ENCODE measurements at regions of chr13 and their contacts with region 1.

Region 1: GRCh38 chr13:78121459-78122348 is 203.1 kb upstream of the EDNRB start:
- DNase-seq: peak; percentile 64
- ATAC-seq: peak; percentile 42; the same call in 1 of the 2 replicates
- H3K4me3 ChIP-seq: no peak overlapping the region
- H3K27ac ChIP-seq: peak overlapping the region; percentile 21; the same call in 1 of the 2 replicates
- H3K4me1 ChIP-seq: no peaks in the 10 kb centered on the region
- H3K27me3 ChIP-seq: no peaks in the 10 kb centered on the region
- CTCF ChIP-seq: peak; percentile 82

Region 2: GRCh38 chr13:77810430-77810829 is 311.3 kb before region 1 on chr13:
- CTCF ChIA-PET with region 1: interaction called, 7 read pairs
- POLR2A ChIA-PET with region 1: no interaction called
- intact Hi-C with region 1: loop called (anchors 1 kb)
- DNase-seq: peak; percentile 53
- ATAC-seq: peak; percentile 53
- H3K4me3 ChIP-seq: no peak overlapping the region
- H3K27ac ChIP-seq: no peak overlapping the region
- H3K4me1 ChIP-seq: peaks cover 1% of the 10 kb centered on the region; the same call in 1 of the 2 replicates
- H3K27me3 ChIP-seq: no peaks in the 10 kb centered on the region
- CTCF ChIP-seq: peak; percentile 59

Region 3: DNA sequence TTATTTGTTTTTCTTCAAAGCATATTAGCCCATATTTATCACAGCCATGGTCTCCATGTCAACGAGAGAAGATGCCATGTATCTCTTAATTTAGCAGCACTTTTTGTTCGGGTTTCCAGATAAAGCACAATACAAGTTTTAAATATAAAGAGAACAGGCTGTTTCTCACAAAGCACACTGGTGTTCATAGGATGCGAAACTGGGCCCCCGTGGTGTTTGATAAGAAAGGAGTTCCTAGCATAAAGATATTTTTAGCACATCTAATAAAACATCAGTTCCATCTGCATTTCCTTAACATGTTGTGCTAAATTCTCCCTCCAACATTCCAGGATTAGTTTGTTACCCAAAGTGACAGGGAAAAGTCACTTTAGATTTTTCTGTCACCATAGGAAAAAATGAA is 130.7 kb before region 1 on chr13:
- CTCF ChIA-PET with region 1: no interaction called
- POLR2A ChIA-PET with region 1: no interaction called
- intact Hi-C with region 1: no loop called
- DNase-seq: no peak
- ATAC-seq: no peak
- H3K4me3 ChIP-seq: no peak overlapping the region
- H3K27ac ChIP-seq: no peak overlapping the region
- H3K4me1 ChIP-seq: no peaks in the 10 kb centered on the region
- H3K27me3 ChIP-seq: no peaks in the 10 kb centered on the region
- CTCF ChIP-seq: no peak

Region 4: DNA sequence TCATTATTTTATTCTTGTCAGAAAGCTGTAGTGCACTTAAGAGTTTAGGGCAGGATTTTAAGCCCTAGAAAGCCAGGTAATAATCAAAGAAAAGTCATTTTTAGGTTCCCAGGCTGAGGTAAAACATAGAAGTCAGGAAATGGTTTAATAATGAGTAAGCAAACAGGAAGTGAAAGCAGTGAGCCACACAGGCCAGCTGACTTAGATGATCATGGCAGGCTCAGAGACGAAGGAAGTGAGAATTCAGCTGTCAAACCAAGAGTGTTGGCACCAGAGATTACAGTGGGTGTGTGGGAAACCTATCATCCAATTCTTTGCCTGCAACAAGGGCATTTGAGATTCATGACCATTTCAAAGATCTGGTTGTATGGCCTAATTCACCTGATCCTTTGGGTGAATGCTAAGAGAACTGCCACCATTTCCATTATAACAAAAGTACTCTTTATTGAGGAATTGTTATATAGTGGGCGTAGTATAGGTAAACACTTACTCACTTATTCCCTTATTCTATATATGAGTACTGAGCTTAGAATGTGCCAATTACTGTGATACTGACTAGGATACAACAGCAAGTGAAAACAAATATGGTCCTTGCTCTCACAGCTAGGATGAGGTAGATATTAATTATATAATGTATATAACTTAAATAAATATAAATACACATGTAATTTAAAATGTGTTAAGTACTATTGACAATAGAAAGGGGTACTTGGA is 99.4 kb before region 1 on chr13:
- CTCF ChIA-PET with region 1: interaction called, 10 read pairs
- POLR2A ChIA-PET with region 1: no interaction called
- intact Hi-C with region 1: no loop called
- DNase-seq: peak; percentile 59
- ATAC-seq: peak; percentile 94
- H3K4me3 ChIP-seq: no peak overlapping the region
- H3K27ac ChIP-seq: peak overlapping the region; percentile 76
- H3K4me1 ChIP-seq: peaks cover 9% of the 10 kb centered on the region
- H3K27me3 ChIP-seq: no peaks in the 10 kb centered on the region
- CTCF ChIP-seq: no peak

Measured in PC-3 (cell line).